Activated B cell treated with CpG ODN at 0.5 μM for 24 hours (primary cell): ENCODE measurements at regions of chr17 and their contacts with region 1.

Region 1: GRCh38 chr17:65181237-65182061 is 44.3 kb downstream of the RGS9 start:
- DNase-seq: no peak
- ATAC-seq: peak; percentile 62
- H3K4me3 Mint-ChIP-seq: no peak overlapping the region
- H3K27ac Mint-ChIP-seq: peak overlapping the region; percentile 66
- H3K4me1 Mint-ChIP-seq: peaks cover 45% of the 10 kb centered on the region
- H3K27me3 Mint-ChIP-seq: peaks cover 3% of the 10 kb centered on the region
- CTCF ChIP-seq: no peak

Region 2: DNA sequence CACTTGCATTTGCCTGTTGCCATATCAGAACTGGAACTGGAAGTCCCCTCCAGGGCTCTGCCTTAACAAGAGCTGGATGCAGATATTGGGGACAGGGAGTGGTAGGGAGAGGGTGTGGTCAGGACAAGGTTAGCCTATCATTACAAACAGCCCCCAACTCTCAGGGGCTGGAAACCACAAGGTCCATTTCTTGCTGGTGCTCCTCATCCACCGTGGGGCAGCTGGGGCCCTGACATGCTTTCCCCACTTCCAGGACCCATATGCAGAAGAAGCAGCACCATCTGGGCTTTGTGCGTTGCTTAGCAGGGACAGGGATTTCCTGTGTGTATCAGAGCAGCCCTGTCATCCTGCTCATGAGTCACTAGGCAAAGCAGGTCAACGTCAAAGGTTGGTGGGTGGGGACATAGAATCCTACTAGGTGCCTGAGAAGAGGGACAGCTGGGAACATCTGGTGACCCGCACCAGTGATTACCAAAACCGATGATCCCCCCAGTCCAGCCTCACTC is 17.4 kb before region 1 on chr17:
- CTCF ChIA-PET with region 1: no interaction called
- POLR2A ChIA-PET with region 1: interaction called, 8 read pairs
- intact Hi-C with region 1: loop called (anchors 1 kb)
- DNase-seq: peak; percentile 27
- ATAC-seq: peak; percentile 94
- H3K4me3 Mint-ChIP-seq: peak overlapping the region; percentile 11
- H3K27ac Mint-ChIP-seq: peak overlapping the region; percentile 55
- H3K4me1 Mint-ChIP-seq: peaks cover 17% of the 10 kb centered on the region
- H3K27me3 Mint-ChIP-seq: no peaks in the 10 kb centered on the region
- CTCF ChIP-seq: no peak